ENCODE measurements at regions of chr11 and their contacts with region 1.

Region 1: GRCh38 chr11:36354221-36355003 is 58.3 kb downstream of the PRR5L start:
- DNase-seq: no peak
- ATAC-seq: peak; percentile 48
- H3K4me3 Mint-ChIP-seq: no peak overlapping the region
- H3K27ac Mint-ChIP-seq: no peak overlapping the region
- H3K4me1 Mint-ChIP-seq: peaks cover 35% of the 10 kb centered on the region
- H3K27me3 Mint-ChIP-seq: peaks cover 69% of the 10 kb centered on the region

Region 2: DNA sequence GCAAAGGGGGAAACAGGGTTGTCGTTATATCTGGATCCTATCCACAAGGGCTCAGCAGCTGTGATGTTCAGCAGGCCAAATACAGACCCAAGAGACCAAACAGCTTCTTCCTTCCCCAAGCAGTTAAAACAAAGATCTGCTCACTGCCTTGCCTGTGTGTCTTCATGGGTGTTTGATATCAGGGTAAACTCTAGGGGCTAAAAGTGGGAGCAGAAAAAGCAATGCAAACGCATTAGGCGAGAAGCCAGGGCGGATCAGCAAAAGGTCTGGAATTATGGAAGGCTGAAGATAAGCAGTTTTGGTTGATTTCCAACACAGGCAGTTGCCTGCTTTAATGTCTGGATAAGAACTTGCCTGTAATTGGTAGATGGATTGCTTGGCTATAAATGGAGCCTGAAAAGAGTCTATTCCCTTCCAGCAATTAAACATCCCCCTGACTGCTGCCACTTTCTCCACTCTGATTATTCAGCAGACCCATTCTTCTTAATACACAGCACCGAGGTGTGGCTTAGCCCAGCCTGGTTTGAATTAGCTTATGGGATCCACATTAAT is 191.5 kb before region 1 on chr11:
- CTCF ChIA-PET with region 1: no interaction called
- DNase-seq: no peak
- ATAC-seq: no peak
- H3K4me3 Mint-ChIP-seq: no peak overlapping the region
- H3K27ac Mint-ChIP-seq: no peak overlapping the region
- H3K4me1 Mint-ChIP-seq: no peaks in the 10 kb centered on the region
- H3K27me3 Mint-ChIP-seq: peaks cover 5% of the 10 kb centered on the region

Region 3: DNA sequence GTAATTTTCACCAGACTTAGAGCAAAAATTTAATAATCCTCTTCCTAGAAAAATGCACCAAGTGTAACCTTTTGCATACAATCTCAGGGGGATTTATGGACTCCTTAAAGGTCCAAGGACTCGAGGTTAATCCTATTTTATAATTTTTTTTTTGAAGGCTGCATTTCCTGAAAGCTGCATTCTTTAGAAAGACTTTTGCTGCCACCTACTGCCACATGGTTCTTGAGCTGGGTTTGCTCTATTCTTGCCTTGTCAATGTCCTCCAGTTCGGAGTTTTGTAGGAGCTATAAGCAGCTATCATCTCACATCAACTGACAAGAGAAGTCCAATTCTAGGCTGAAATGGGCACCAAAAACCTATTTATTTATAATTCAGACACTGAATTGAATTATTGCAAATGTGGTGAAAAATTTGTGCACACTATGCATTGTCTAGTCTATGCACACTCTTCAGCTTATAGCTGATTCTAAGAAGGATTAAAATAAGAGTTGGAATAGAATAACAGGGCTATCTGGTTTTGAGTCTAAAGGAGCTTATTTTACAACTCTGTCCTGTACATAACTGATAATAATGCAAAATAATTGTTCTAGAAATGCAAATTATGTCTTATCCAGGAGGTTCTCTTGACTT is 124.4 kb after region 1 on chr11:
- CTCF ChIA-PET with region 1: interaction called, 11 read pairs
- DNase-seq: no peak
- ATAC-seq: no peak
- H3K4me3 Mint-ChIP-seq: no peak overlapping the region
- H3K27ac Mint-ChIP-seq: no peak overlapping the region
- H3K4me1 Mint-ChIP-seq: peaks cover 5% of the 10 kb centered on the region
- H3K27me3 Mint-ChIP-seq: no peaks in the 10 kb centered on the region